Ascending aorta (tissue), 2 donors: ENCODE measurements at regions of chr1 and their contacts with region 1.

Region 1: DNA sequence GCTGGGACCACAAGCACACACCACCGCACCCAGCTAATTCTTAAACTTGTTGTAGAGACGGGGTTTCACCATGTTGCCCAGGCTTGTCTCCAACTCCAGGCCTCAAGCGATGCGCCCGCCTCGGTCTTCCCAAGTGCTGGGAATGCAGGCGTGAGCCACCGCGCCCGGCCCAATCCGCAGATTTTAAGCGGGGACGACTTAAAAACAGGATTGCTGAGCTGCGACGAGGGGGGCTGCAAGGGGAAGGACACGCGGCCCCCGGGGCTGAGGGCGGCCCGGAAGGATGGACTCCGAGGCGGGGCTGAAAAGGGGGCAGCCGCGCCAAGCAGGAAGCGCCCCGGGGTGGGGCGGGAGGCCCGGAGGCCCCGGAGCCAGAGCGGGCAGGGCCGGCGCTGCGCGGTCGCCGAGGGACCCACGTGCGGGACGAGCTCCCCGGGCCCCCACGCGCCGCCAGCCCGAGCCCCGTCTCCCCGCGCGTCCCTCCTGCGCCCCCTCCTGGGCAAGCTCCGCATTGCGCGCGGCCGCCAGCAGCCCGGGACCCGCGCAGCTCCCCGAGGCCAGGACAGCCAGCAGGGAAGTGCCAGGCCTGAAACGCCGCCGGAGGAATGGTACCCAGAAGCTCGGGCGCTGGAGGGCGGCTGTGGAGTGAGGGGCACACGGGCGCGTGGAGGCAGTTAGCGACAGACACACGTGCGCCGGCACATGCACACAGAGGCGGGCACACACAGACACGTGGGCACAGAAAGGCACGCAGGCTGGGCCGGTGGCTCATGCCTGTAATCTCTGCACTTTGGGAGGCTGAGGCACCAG is 5.5 kb upstream of the PRKCZ start:
- DNase-seq: peak in 1 of 2 donors; percentile 73
- H3K4me3 ChIP-seq: peak overlapping the region; percentile 3 to 37
- H3K27ac ChIP-seq: no peak overlapping the region
- H3K4me1 ChIP-seq: no peaks in the 10 kb centered on the region
- H3K27me3 ChIP-seq: peaks cover 4% of the 10 kb centered on the region
- CTCF ChIP-seq: peak; percentile 24 to 76 (median 60)

Region 2: GRCh38 chr1:1943834-1944570 is 100.7 kb before region 1 on chr1:
- intact Hi-C with region 1: loop called (anchors 10 kb)
- DNase-seq: no peak
- H3K4me3 ChIP-seq: peak overlapping the region in 1 of 2 donors; percentile 42
- H3K27ac ChIP-seq: no peak overlapping the region
- H3K4me1 ChIP-seq: no peaks in the 10 kb centered on the region
- H3K27me3 ChIP-seq: no peaks in the 10 kb centered on the region
- CTCF ChIP-seq: peak; percentile 68 to 83 (median 82)